ENCODE measurements at regions of chr17 and their contacts with region 1.

Region 1: GRCh38 chr17:74457146-74457819 is 9.2 kb upstream of the CD300A start:
- DNase-seq: peak; percentile 69
- H3K4me3 Mint-ChIP-seq: no peak overlapping the region
- H3K27ac Mint-ChIP-seq: no peak overlapping the region
- H3K4me1 Mint-ChIP-seq: peaks cover 7% of the 10 kb centered on the region
- H3K27me3 Mint-ChIP-seq: no peaks in the 10 kb centered on the region
- CTCF ChIP-seq: peak; percentile 92

Region 2: GRCh38 chr17:74408262-74408661 is 49.0 kb before region 1 on chr17:
- CTCF ChIA-PET with region 1: interaction called, 8 read pairs
- POLR2A ChIA-PET with region 1: no interaction called
- intact Hi-C with region 1: loop called (anchors 2 kb)
- DNase-seq: peak; percentile 58
- H3K4me3 Mint-ChIP-seq: no peak overlapping the region
- H3K27ac Mint-ChIP-seq: no peak overlapping the region
- H3K4me1 Mint-ChIP-seq: no peaks in the 10 kb centered on the region
- H3K27me3 Mint-ChIP-seq: no peaks in the 10 kb centered on the region
- CTCF ChIP-seq: peak; percentile 20

Region 3: DNA sequence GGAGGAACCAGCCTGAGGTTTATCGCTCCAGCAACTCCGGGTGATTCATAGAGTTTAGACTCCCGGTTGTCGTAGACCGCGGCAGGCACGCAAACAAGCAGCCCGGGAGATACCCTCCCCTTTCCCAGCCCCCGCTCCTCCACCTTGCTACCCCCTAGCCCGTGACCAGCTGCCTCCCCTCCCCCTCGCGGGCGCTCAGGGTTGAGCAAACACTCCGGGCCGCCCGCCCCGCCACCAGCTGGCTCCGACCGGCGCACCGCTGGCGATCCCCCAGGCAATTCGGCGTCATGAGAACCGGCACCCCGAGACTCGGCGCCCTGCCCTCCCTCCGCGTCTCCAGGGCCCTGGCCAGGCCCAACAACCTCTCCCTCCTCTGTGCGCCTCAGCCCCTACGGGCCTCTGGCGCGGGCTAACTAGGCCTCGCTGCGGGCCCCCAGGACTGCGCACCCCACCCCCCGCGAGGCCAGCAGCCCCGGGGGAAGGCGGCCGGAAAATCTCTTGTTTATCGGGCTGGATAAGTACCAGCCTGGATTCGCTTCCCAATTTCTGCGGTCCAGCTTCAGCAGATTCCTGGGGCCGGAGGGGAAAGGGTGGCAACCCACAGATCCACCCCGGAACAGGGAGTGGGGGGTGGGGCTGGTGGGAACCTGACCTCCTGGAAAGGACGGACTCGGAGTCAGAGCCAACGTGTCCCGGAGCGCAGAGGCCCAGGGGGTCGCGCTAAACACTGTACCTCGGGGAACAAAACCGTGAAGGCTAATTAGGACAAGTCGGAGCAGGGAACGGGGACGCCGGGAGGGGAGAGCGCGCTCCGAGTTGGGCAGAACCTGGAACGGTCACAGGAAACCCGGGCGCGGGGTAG is 26.3 kb before region 1 on chr17:
- CTCF ChIA-PET with region 1: interaction called, 7 read pairs
- POLR2A ChIA-PET with region 1: interaction called, 16 read pairs
- intact Hi-C with region 1: no loop called
- DNase-seq: peak; percentile 93
- H3K4me3 Mint-ChIP-seq: peak overlapping the region; percentile 88
- H3K27ac Mint-ChIP-seq: peak overlapping the region; percentile 98
- H3K4me1 Mint-ChIP-seq: peaks cover 34% of the 10 kb centered on the region
- H3K27me3 Mint-ChIP-seq: no peaks in the 10 kb centered on the region
- CTCF ChIP-seq: no peak

Region 4: DNA sequence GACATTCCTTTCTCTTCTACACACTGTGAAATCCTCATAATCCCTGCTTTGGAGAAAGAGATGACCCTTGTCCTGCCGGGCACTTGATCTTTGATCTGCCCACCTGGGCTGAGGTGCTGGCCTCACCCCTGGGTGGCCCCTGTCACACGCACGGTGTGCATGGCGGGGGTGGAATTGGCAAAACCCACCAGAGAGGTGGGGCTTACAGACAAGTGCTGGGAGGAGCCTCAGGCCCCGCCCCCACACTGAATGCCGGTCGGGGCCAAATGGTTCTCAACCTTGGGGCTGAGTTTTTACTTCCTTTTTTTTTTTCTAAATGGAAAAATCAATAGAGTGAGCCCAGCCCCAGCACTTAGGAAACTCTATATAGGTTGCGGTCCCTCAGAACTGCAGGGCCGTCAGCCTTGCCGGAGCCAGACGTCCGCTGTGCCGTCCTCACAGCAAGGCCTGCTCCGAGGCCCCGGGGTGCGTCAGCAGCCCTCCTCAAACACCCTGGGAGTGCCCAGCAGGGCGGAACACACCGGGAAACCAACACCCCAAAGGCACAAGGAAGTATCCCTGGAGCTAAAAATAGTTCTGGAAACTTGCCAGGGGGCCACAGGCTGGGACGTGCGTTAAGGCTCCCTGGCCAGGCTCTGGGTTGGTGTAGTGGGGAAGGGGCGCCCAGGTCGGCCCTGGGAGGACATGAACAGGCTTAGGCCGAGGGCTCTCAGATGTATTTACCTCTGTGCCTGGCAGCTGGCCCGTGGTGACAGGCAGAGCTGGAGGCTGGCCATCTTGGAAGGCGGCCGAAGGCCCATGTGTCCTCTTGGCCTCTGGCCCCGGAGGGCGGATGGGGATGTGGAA is 14.4 kb before region 1 on chr17:
- CTCF ChIA-PET with region 1: interaction called, 49 read pairs
- POLR2A ChIA-PET with region 1: interaction called, 28 read pairs
- intact Hi-C with region 1: loop called (anchors 1 kb)
- DNase-seq: peak; percentile 91
- H3K4me3 Mint-ChIP-seq: peak overlapping the region; percentile 62
- H3K27ac Mint-ChIP-seq: peak overlapping the region; percentile 78
- H3K4me1 Mint-ChIP-seq: peaks cover 39% of the 10 kb centered on the region
- H3K27me3 Mint-ChIP-seq: no peaks in the 10 kb centered on the region
- CTCF ChIP-seq: no peak

Region 5: GRCh38 chr17:74573169-74573568 is 115.9 kb after region 1 on chr17:
- CTCF ChIA-PET with region 1: no interaction called
- POLR2A ChIA-PET with region 1: no interaction called
- intact Hi-C with region 1: no loop called
- DNase-seq: no peak
- H3K4me3 Mint-ChIP-seq: no peak overlapping the region
- H3K27ac Mint-ChIP-seq: no peak overlapping the region
- H3K4me1 Mint-ChIP-seq: peaks cover 18% of the 10 kb centered on the region
- H3K27me3 Mint-ChIP-seq: no peaks in the 10 kb centered on the region
- CTCF ChIP-seq: no peak

Region 6: DNA sequence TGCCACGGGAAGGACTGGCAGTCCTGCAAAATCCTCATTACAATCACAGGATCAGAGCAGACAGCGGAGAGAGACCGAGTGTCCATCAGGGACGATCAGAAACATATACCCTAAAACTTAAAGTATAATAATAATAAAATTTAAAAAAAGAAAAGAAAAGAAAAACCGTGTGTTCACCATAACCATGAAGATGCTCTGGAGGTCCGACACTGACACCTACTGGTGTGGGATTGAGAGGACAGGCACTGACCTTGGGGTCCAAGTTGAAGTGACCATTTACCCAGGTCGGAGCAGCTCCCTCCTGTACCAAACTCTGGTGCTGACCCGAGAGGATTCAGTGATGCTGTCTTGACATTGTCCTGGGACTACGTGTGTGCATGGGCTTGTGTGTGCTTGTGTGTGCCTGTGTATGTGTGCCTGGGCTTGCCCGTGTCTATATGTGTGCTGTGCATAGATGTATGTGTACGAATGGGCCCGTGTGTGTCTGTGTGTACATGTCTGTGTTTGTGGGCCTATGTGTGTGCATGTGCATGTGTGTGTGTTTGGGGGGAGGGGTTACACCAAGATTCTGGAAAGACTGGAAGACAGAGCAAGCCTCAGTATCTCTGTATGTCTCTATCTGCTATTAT is 144.8 kb after region 1 on chr17:
- CTCF ChIA-PET with region 1: interaction called, 15 read pairs
- POLR2A ChIA-PET with region 1: interaction called, 3 read pairs
- intact Hi-C with region 1: loop called (anchors 2 kb)
- DNase-seq: peak; percentile 80
- H3K4me3 Mint-ChIP-seq: no peak overlapping the region
- H3K27ac Mint-ChIP-seq: no peak overlapping the region
- H3K4me1 Mint-ChIP-seq: peaks cover 45% of the 10 kb centered on the region
- H3K27me3 Mint-ChIP-seq: no peaks in the 10 kb centered on the region
- CTCF ChIP-seq: peak; percentile 88